ENCODE measurements at regions of chr10 and their contacts with region 1.

Region 1: GRCh38 chr10:73879296-73880173 is 5.2 kb upstream of the CAMK2G start:
- DNase-seq: peak; percentile 69 to 84
- ATAC-seq: peak; percentile 76 to 77
- H3K4me3 ChIP-seq: no peak overlapping the region
- H3K27ac ChIP-seq: peak overlapping the region in 3 of 4 donors; percentile 45 to 55 (median 47)
- H3K4me1 ChIP-seq: peaks cover 16 to 23% of the 10 kb centered on the region in 2 donors
- H3K27me3 ChIP-seq: no peaks in the 10 kb centered on the region
- CTCF ChIP-seq: peak; percentile 88 to 98 (median 97)
- POLR2A ChIP-seq: no peak

Region 2: DNA sequence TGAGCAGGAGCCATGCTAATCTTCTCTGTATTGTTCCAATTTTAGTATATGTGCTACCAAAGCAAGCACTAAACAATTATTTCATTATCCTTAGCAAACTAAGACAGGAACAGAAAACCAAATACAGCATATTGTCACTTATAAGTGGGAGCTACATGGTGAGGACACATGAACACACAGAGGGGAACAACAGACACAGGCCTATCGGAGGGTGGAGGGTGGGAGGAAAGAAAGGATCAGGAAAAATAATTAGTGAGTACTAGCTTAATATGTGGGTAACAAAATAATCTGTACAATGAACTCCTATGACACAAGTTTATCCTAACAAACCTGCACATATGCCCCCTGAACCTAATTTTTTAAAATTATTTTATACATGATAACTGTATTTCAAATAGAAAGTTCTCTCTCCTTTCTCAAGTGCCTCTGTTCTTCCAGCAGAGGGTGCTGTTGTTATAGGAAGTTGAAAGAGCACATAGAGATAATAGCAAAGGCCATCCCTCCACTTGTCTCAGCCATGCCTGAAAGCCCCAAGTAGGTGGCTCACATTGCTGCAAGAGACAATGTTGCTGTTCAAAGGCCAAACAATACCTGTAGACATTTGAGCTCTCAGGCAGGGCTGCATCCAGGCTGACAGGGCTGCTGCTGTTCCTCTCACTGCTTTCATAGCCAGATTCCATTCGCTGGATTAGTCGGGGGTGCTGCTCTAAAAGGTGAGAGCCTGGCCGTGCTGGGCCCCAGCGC is 350.3 kb before region 1 on chr10:
- in situ Hi-C with region 1: no loop called
- intact Hi-C with region 1: no loop called
- DNase-seq: peak; percentile 15 to 65
- ATAC-seq: peak; percentile 67 to 91
- H3K4me3 ChIP-seq: no peak overlapping the region
- H3K27ac ChIP-seq: peak overlapping the region; percentile 51 to 78 (median 58)
- H3K4me1 ChIP-seq: peaks cover 18 to 25% of the 10 kb centered on the region in 2 donors
- H3K27me3 ChIP-seq: no peaks in the 10 kb centered on the region
- CTCF ChIP-seq: peak; percentile 77 to 89 (median 86)
- POLR2A ChIP-seq: no peak

Region 3: DNA sequence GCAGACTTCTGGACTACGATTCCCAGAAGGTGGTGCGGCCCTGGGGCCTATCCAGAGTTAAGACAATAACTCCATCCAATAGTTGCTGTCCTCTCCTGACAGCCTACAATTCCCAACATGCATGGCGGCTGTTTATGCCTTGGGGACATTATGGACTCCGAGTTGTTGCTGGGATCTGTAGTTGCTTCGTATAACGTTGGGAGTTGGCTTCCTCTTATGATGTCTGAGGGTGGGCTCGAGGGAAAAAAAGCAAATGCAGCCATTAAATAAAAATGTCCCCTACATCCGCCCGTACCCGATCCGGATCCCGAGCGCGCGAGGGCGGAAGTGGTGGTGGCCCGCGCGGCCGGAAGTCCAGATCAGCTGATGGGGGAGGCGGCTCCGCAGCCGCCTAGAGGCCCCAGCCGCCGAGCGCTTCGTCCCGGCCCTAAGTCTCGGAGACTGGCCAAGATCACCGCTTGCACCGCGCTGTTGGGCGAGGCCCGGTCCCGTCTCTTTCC is 94.3 kb before region 1 on chr10 and contains the start of gene ZSWIM8:
- in situ Hi-C with region 1: no loop called
- intact Hi-C with region 1: loop called (anchors 5 kb)
- DNase-seq: peak; percentile 89 to 91
- ATAC-seq: peak; percentile 93 to 94
- H3K4me3 ChIP-seq: peak within 1 kb of the TSS; percentile 73 to 93 (median 86)
- H3K27ac ChIP-seq: peak within 1 kb of the TSS; percentile 80 to 95 (median 90)
- H3K4me1 ChIP-seq: peaks cover 53 to 62% of the 10 kb centered on the region in 2 donors
- H3K27me3 ChIP-seq: no peaks in the 10 kb centered on the region
- CTCF ChIP-seq: peak in 1 of 5 experiments; percentile 25
- POLR2A ChIP-seq: peak; percentile 85 to 92
- total RNA-seq, gene ZSWIM8: 52.6 to 81.4 (median 78.9) TPM

Region 4: GRCh38 chr10:73848821-73849489 is 30.6 kb before region 1 on chr10:
- in situ Hi-C with region 1: loop called in 3 of 4 experiments (anchors 5 kb)
- intact Hi-C with region 1: loop called (anchors 1 kb)
- DNase-seq: peak; percentile 58 to 74
- ATAC-seq: peak; percentile 82 to 85
- H3K4me3 ChIP-seq: no peak overlapping the region
- H3K27ac ChIP-seq: peak overlapping the region; percentile 43 to 73 (median 44)
- H3K4me1 ChIP-seq: peaks cover 11 to 16% of the 10 kb centered on the region in 2 donors
- H3K27me3 ChIP-seq: no peaks in the 10 kb centered on the region
- CTCF ChIP-seq: peak; percentile 99 to 100 (median 100)
- POLR2A ChIP-seq: no peak

Region 5: DNA sequence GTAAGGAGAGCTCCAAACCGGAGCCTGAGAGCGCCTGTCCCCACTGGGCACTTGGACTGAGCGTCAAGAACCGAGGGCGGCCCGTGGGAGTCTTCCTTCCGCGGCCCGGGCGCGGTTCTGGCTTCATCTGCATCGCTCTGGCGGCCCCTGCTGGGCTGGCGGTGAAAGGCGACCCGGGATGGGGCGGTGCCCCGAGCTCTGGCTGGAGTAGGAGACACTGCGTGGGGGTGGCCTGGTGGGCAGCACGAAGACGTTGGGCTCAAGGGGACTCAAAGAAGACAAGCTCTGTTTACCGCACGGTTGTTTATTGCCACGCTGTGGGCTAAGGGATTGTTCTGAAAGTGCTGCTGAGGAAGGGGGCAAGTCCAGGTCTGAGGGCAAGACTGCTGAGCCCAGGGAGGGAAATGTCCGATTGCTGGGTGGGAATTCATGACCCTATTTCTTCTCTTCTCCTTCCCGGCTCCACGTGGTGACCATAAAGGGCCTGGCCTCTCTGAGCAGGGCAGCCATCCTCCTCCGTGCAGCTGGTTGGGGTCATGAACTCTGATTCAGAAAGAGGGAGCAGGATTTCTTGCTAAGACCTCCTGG is 61.2 kb after region 1 on chr10:
- in situ Hi-C with region 1: loop called in 1 of 4 experiments (anchors 10 kb)
- intact Hi-C with region 1: no loop called
- DNase-seq: peak; percentile 63 to 79
- ATAC-seq: peak; percentile 86 to 90
- H3K4me3 ChIP-seq: peak overlapping the region in 3 of 4 donors; percentile 13 to 39 (median 30)
- H3K27ac ChIP-seq: peak overlapping the region; percentile 69 to 82 (median 80)
- H3K4me1 ChIP-seq: peaks cover 29 to 42% of the 10 kb centered on the region in 2 donors
- H3K27me3 ChIP-seq: no peaks in the 10 kb centered on the region
- CTCF ChIP-seq: peak; percentile 85 to 96 (median 95)
- POLR2A ChIP-seq: no peak

Measured in gastrocnemius medialis (tissue), 4 donors.